Activated B cell treated with CpG ODN at 0.5 μM for 24 hours (primary cell): ENCODE measurements at regions of chr14 and their contacts with region 1.

Region 1: DNA sequence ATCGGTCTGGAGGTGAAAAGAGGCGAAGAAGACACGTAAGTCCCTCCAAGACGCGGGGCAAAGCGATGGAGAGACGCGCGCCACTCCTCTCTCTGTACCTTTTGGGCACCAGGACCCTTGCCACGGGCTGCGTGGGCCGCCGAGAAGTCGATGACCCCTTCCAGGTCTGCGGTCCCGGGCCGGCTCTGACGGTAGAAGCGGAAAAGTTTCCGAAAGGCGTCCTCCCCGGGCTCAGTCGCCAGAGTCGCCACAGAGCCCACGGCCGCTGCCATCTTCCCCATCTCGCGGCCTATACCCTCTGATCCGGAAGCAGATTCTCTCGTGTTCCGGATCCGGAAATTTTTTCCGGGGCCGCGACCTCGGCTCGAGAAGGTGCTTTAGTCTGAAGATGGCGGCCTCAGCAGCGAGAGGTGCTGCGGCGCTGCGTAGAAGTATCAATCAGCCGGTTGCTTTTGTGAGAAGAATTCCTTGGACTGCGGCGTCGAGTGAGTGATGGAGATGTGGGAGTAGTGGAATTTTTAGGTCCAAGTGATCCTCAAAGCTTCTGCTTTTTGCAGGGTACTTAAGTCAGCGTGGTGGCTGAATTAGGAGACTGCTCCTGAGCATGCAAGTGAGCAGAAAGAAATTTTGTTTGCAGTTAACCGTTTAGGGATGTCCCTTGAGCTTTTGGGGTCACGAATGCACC is at the starts of genes ALKBH1 and SLIRP:
- DNase-seq: peak; percentile 73
- ATAC-seq: peak; percentile 98
- H3K4me3 Mint-ChIP-seq: peak within 1 kb of the TSS; percentile 96
- H3K27ac Mint-ChIP-seq: peak within 1 kb of the TSS; percentile 91
- H3K4me1 Mint-ChIP-seq: peaks cover 45% of the 10 kb centered on the region
- H3K27me3 Mint-ChIP-seq: no peaks in the 10 kb centered on the region
- CTCF ChIP-seq: no peak
- total RNA-seq, gene ALKBH1: 14.4 and 18.0 TPM in 2 replicates
- total RNA-seq, gene SLIRP: 58.6 and 61.7 TPM in 2 replicates

Region 2: DNA sequence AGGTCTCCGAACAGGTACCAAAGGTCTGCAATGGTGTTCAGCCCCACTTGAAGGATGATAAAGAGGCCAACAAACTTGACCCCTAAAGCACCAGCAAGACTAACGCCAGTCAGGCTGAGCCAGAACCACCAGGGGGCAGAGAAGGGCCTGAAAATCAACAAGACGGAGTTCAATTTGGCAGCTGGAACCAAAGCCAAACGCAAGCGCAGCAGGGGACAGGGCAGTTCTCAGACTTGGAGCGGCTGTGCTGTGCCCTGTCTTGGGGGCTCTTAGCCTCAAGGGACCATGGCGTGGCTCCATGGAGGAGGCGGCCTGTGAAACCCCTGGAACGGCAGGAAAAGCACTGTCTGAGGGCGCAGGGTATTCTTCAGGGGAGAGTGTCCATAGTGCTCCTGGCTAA is 406.8 kb before region 1 on chr14:
- CTCF ChIA-PET with region 1: no interaction called
- POLR2A ChIA-PET with region 1: no interaction called
- intact Hi-C with region 1: loop called (anchors 5 kb)
- DNase-seq: peak; percentile 32
- ATAC-seq: peak; percentile 74
- H3K4me3 Mint-ChIP-seq: no peak overlapping the region
- H3K27ac Mint-ChIP-seq: no peak overlapping the region
- H3K4me1 Mint-ChIP-seq: no peaks in the 10 kb centered on the region
- H3K27me3 Mint-ChIP-seq: no peaks in the 10 kb centered on the region
- CTCF ChIP-seq: no peak

Region 3: DNA sequence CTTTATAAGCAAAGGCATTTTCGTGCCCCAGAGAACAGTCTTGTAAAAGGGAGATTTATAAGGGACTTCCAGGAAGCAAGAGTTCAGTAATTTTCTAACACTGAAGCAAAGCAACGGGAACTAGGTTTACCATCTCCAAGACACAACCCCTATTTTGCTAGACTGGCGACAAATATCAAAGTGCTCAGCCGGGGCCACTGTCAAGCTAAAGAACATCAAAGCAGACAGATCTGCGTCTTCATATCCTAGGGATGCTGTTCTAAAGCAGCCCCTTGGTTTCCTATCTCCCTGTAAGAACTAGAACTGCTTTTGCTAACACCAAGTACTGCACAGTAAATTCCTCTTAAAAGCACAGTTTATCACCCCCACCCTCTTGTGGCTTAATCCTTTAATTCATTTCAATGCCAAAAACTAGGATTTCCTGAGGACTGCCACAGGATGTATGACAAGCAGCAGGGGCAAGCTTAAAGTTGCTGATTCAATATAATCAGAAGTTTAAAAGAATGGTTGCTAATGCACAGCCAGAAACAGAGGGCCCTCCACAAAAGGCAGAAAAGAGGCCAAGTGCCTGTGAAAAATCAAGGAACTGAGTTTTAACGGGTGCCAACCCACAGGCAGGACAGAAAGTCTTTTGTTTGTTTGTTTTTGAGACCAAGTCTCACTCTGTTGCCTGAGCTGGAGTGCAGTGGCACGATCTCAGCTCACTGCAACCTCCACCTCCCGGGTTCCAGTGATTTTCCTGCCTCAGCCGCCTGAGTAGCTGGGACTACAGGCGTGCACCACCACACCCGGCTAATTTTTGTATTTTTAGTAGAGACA is 165.2 kb before region 1 on chr14:
- CTCF ChIA-PET with region 1: no interaction called
- POLR2A ChIA-PET with region 1: no interaction called
- intact Hi-C with region 1: loop called (anchors 10 kb)
- DNase-seq: no peak
- ATAC-seq: no peak
- H3K4me3 Mint-ChIP-seq: no peak overlapping the region
- H3K27ac Mint-ChIP-seq: peak overlapping the region; percentile 68
- H3K4me1 Mint-ChIP-seq: peaks cover 28% of the 10 kb centered on the region
- H3K27me3 Mint-ChIP-seq: no peaks in the 10 kb centered on the region
- CTCF ChIP-seq: no peak

Region 4: GRCh38 chr14:77554816-77555599 is 152.9 kb before region 1 on chr14:
- CTCF ChIA-PET with region 1: no interaction called
- POLR2A ChIA-PET with region 1: no interaction called
- intact Hi-C with region 1: no loop called
- DNase-seq: no peak
- ATAC-seq: no peak
- H3K4me3 Mint-ChIP-seq: no peak overlapping the region
- H3K27ac Mint-ChIP-seq: peak overlapping the region; percentile 31
- H3K4me1 Mint-ChIP-seq: no peaks in the 10 kb centered on the region
- H3K27me3 Mint-ChIP-seq: no peaks in the 10 kb centered on the region
- CTCF ChIP-seq: no peak

Region 5: DNA sequence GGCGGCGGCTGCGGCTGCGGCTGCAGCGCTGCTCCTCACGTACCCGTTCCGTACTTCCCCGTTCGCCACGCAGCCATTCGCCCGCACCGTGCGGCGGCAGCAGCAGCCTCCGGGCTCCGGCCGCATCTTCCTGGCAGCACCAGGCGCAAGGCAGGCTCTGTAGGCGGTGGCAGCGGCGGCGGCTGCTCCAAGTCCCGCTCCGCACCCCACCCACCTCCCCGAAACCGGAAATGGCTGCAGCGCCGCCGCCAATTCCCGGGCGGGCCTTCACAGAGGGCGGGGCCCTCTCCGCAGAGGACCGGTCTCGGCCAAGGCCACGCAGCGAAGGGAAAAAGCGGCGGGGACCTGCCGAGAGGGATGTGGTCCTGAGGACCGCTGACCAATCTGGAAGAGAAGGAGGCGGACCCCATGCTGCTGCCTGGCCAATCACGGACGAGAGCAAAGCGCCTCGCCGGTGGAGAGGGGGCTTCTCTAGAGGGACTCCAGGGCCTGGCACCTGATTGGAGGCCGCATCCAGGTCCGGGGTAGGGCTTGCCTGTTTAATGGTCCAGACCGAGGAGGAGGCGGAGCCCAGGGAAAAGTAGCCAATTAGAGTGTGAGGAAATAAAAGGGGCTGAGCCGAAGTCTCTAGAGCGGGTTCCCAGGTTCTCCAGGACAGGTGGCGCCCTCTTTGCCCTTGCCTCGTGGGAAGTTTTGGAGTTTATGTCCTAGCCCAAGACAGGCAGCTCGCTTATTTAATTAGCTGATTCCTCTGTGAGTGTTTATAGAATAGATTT is 91.2 kb before region 1 on chr14 and contains the start of gene SPTLC2:
- CTCF ChIA-PET with region 1: no interaction called
- POLR2A ChIA-PET with region 1: interaction called, 6 read pairs
- intact Hi-C with region 1: loop called (anchors 1 kb)
- DNase-seq: peak; percentile 84
- ATAC-seq: peak; percentile 94
- H3K4me3 Mint-ChIP-seq: peak within 1 kb of the TSS; percentile 95
- H3K27ac Mint-ChIP-seq: peak within 1 kb of the TSS; percentile 86
- H3K4me1 Mint-ChIP-seq: peaks cover 42% of the 10 kb centered on the region
- H3K27me3 Mint-ChIP-seq: no peaks in the 10 kb centered on the region
- CTCF ChIP-seq: no peak
- total RNA-seq, gene SPTLC2: 34.1 and 43.8 TPM in 2 replicates

Region 6: GRCh38 chr14:77641534-77642341 is 66.1 kb before region 1 on chr14:
- CTCF ChIA-PET with region 1: no interaction called
- POLR2A ChIA-PET with region 1: no interaction called
- intact Hi-C with region 1: loop called (anchors 2 kb)
- DNase-seq: peak; percentile 61
- ATAC-seq: peak; percentile 78
- H3K4me3 Mint-ChIP-seq: peak overlapping the region; percentile 95
- H3K27ac Mint-ChIP-seq: peak overlapping the region; percentile 93
- H3K4me1 Mint-ChIP-seq: peaks cover 16% of the 10 kb centered on the region
- H3K27me3 Mint-ChIP-seq: no peaks in the 10 kb centered on the region
- CTCF ChIP-seq: no peak

Region 7: DNA sequence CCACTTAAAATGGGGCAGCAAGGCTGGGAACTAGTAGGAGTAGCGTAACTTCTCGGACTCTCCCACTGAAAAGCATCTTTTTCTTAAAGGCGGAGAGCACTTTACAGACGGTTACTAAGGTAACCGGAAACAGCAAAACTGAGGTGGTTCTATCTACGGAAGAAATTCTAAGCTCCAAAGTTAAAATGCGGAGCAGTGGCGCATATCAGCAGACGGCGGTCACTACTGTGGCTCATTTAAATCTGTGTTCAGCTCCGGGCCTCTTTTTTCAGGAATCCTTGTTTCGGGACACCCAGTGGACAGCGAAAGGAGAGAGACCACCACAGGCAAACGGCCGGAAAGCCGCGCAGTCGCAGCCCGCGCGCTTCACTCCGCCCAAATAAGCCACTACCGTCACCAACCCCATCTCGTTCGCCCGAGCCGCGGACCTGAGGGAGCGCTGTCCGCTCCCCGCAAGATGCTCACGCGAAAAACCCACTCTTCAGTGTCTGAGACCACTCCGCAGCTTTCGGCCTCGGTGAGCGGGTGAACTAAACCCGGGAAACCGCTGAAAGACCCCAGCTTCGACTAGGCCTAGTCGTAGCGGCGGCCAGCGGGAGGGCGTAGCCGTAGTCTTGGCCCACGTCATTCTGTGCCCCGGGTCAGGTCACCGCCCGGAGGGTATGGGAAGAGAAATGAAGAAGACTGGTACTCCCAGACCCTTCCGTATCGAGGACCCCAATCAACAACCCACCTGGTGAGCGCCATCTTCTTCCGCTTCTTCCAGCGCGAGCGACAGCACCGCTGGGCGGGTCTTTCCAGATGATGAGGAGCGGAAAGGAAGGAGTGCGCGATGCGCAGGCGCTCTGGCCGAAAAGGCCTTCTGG is 52.7 kb after region 1 on chr14 and contains the start of gene SNW1:
- CTCF ChIA-PET with region 1: no interaction called
- POLR2A ChIA-PET with region 1: interaction called, 4 read pairs
- intact Hi-C with region 1: loop called (anchors 1 kb)
- DNase-seq: peak; percentile 77
- ATAC-seq: peak; percentile 91
- H3K4me3 Mint-ChIP-seq: peak within 1 kb of the TSS; percentile 97
- H3K27ac Mint-ChIP-seq: peak within 1 kb of the TSS; percentile 97
- H3K4me1 Mint-ChIP-seq: peaks cover 37% of the 10 kb centered on the region
- H3K27me3 Mint-ChIP-seq: no peaks in the 10 kb centered on the region
- CTCF ChIP-seq: no peak
- total RNA-seq, gene SNW1: 88.2 and 89.3 TPM in 2 replicates

Region 8: DNA sequence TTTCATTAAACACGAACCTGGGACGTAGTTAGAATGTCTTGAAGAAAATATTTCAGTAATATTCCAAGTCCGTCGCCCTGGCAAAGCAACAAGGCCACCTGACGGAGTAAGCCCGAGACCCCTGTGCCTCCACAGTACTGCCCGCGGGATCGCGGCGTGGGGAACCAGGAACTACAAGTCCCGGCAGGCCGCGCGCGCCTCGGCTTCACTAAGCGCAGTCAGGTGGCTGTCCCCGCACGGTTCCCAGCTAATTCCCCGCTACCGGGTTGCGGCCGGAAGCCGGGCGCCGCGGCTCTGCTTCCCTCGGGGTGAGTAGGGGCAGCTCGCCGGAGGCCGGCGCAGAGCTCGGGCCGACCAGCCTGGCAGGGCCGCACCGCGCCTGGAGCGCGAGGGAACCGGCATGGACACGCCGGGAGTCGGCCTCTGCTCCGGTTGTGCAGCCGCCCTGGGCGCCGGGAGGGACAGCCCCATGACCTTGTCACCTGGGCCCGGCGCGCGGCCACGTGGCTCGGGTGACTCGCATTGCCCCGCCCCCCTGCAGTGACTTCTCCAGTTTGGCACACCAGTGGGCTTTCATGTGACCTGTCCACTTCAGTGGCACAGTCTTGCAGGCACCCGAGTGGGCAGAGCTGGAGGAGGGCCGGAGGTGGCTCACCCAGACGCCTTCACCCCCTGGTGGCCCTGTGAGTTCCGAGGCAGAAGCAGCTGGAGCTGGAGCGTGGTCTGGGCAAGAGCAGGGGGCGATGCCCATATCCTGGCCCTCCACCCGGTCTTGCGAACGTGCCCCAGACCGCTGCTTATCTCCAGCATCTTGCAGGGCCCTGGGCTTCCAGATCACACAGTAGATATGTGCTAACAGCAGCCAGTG is 92.2 kb after region 1 on chr14 and contains the start of gene ADCK1:
- CTCF ChIA-PET with region 1: no interaction called
- POLR2A ChIA-PET with region 1: no interaction called
- intact Hi-C with region 1: loop called (anchors 1 kb)
- DNase-seq: peak; percentile 86
- ATAC-seq: peak; percentile 91
- H3K4me3 Mint-ChIP-seq: peak within 1 kb of the TSS; percentile 88
- H3K27ac Mint-ChIP-seq: peak within 1 kb of the TSS; percentile 88
- H3K4me1 Mint-ChIP-seq: peaks cover 7% of the 10 kb centered on the region
- H3K27me3 Mint-ChIP-seq: no peaks in the 10 kb centered on the region
- CTCF ChIP-seq: no peak
- total RNA-seq, gene ADCK1: 8.6 and 10.4 TPM in 2 replicates

Region 9: GRCh38 chr14:77825895-77826519 is 118.1 kb after region 1 on chr14:
- CTCF ChIA-PET with region 1: no interaction called
- POLR2A ChIA-PET with region 1: no interaction called
- intact Hi-C with region 1: no loop called
- DNase-seq: no peak
- ATAC-seq: no peak
- H3K4me3 Mint-ChIP-seq: no peak overlapping the region
- H3K27ac Mint-ChIP-seq: no peak overlapping the region
- H3K4me1 Mint-ChIP-seq: no peaks in the 10 kb centered on the region
- H3K27me3 Mint-ChIP-seq: no peaks in the 10 kb centered on the region
- CTCF ChIP-seq: no peak

Region 10: DNA sequence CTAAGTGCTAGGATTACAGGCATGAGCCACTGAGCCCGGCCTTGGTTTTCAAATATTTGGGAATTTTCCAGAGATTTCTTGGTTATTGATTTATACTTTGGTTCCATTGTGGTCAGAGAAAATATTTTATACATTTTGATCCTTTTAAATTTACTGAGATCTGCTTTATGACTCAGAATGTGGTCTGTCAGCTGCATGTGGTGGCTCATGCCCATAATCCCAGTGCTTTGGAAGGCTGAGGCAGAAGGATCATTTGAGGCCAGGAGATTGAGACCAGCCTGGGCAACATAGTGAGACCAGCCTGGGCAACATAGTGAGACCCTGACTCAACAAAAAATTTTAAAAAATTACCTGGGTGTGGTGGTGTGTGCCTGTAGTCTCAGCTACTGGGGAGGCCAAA is 141.8 kb after region 1 on chr14:
- CTCF ChIA-PET with region 1: no interaction called
- POLR2A ChIA-PET with region 1: no interaction called
- intact Hi-C with region 1: no loop called
- DNase-seq: no peak
- ATAC-seq: no peak
- H3K4me3 Mint-ChIP-seq: no peak overlapping the region
- H3K27ac Mint-ChIP-seq: no peak overlapping the region
- H3K4me1 Mint-ChIP-seq: no peaks in the 10 kb centered on the region
- H3K27me3 Mint-ChIP-seq: no peaks in the 10 kb centered on the region
- CTCF ChIP-seq: no peak

Region 11: GRCh38 chr14:78997811-78998210 is 1289.9 kb after region 1 on chr14:
- CTCF ChIA-PET with region 1: no interaction called
- POLR2A ChIA-PET with region 1: no interaction called
- intact Hi-C with region 1: no loop called
- DNase-seq: no peak
- ATAC-seq: no peak
- H3K4me3 Mint-ChIP-seq: no peak overlapping the region
- H3K27ac Mint-ChIP-seq: no peak overlapping the region
- H3K4me1 Mint-ChIP-seq: no peaks in the 10 kb centered on the region
- H3K27me3 Mint-ChIP-seq: no peaks in the 10 kb centered on the region
- CTCF ChIP-seq: no peak